T-cell (primary cell): ENCODE measurements at regions of chr11 and their contacts with region 1.

Region 1: DNA sequence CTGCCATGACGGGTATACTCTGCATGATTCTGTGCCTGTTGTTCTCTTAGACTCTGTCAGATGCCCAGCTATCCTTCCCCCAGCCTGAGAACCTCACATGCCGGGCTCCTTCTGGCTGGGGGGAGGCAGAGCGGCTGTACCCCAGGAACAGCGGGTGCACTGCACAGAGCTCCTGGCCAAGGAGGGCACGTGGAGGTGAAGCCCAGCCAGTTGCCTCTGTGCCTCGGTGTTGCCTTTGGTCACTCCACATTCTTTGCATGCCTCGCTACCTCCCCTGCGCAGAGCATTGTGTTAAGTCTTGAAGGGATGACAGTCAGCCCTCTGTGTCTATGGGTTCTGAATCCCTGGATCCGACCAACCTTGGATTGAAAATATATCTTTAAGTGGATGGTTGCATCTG is 77.7 kb downstream of the FEZ1 start:
- DNase-seq: no peak
- ATAC-seq: no peak
- H3K4me3 ChIP-seq: no peak overlapping the region
- H3K4me3 Mint-ChIP-seq: no peak overlapping the region
- H3K27ac ChIP-seq: no peak overlapping the region
- H3K27ac Mint-ChIP-seq: no peak overlapping the region
- H3K4me1 ChIP-seq: no peaks in the 10 kb centered on the region
- H3K4me1 Mint-ChIP-seq: peaks cover 0 to 2% (median 0%) of the 10 kb centered on the region in 3 donors
- H3K27me3 ChIP-seq: peaks cover 0 to 9% of the 10 kb centered on the region in 2 experiments
- H3K27me3 Mint-ChIP-seq: peaks cover 4 to 11% of the 10 kb centered on the region in 2 donors

Region 2: DNA sequence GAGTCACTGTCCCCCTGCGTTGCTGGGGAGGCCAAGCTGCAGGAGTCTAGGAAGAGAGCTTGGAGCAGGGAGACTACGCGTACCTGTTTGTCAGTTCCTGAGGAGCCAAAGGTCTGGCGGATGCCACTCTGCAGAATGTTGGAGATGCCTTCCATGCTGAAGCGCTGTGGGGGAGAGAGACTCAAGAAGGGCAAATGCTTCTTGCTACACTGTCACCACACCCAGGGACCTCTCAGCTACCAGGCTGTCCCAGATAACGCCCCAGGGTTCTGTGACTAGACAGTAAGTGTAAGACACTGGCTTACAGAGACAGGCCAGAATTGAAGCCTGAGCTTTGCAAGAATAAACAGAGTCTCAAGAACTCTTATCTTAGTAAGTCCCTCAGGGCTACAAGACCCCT is 35.7 kb after region 1 on chr11:
- CTCF ChIA-PET with region 1: interaction called in 1 of 2 experiments, 11 read pairs
- POLR2A ChIA-PET with region 1: no interaction called
- DNase-seq: no peak
- ATAC-seq: no peak
- H3K4me3 ChIP-seq: no peak overlapping the region
- H3K4me3 Mint-ChIP-seq: no peak overlapping the region
- H3K27ac ChIP-seq: no peak overlapping the region
- H3K27ac Mint-ChIP-seq: no peak overlapping the region
- H3K4me1 ChIP-seq: no peaks in the 10 kb centered on the region
- H3K4me1 Mint-ChIP-seq: peaks cover 0 to 14% (median 8%) of the 10 kb centered on the region in 3 donors
- H3K27me3 ChIP-seq: no peaks in the 10 kb centered on the region
- H3K27me3 Mint-ChIP-seq: peaks cover 0 to 2% of the 10 kb centered on the region in 2 donors